ENCODE measurements at regions of chr22 and their contacts with region 1.

Region 1: DNA sequence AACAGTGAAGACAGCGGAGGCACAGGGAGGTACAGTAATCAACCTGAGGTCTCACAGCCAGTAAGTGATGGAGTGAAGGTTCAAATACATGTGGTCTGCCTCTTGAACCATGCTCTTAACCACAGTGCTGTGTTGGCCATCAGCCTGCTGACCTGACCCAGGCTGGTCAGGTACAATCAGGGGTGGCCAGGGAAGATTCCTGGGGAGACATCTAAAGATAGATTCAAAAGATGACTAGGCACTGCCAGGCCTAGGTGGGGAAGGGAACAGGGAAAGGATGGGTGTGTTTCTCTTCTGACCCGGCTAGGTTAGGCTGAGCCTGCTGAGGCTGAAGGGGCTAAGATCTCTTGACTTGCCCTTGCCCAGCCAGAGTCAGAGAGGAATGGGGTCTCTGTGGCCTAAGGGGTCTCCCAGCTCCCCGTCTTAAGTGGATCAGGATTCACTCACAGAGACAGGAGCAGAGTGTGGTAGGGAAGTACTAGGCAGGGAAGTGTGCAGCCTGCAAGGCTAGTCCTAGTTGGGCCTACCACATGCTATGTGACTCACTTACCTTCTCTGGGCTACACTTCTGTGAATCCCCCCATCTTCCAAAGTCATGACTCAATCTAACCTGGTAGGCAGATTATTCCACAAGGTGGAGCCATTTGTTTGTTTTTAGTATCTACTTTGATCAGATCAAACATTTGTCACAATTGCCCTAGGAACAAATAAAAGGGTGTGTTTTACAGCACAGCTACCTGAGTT is 10.4 kb upstream of the SREBF2 start:
- DNase-seq: peak; percentile 65
- ATAC-seq: peak; percentile 99
- H3K4me3 Mint-ChIP-seq: no peak overlapping the region
- H3K27ac Mint-ChIP-seq: peak overlapping the region; percentile 84
- H3K4me1 Mint-ChIP-seq: peaks cover 29% of the 10 kb centered on the region
- H3K27me3 Mint-ChIP-seq: no peaks in the 10 kb centered on the region
- CTCF ChIP-seq: peak; percentile 73

Region 2: GRCh38 chr22:41832553-41833368 is 10.3 kb after region 1 on chr22 and contains the start of gene SREBF2:
- CTCF ChIA-PET with region 1: no interaction called
- POLR2A ChIA-PET with region 1: interaction called, 11 read pairs
- intact Hi-C with region 1: no loop called
- DNase-seq: peak; percentile 100
- ATAC-seq: peak; percentile 95
- H3K4me3 Mint-ChIP-seq: peak within 1 kb of the TSS; percentile 92
- H3K27ac Mint-ChIP-seq: peak within 1 kb of the TSS; percentile 100
- H3K4me1 Mint-ChIP-seq: peaks cover 47% of the 10 kb centered on the region
- H3K27me3 Mint-ChIP-seq: no peaks in the 10 kb centered on the region
- CTCF ChIP-seq: no peak
- total RNA-seq, gene SREBF2: 87.1 to 92.9 TPM